T-cell (primary cell): ENCODE measurements at regions of chr11 and their contacts with region 1.

Region 1: DNA sequence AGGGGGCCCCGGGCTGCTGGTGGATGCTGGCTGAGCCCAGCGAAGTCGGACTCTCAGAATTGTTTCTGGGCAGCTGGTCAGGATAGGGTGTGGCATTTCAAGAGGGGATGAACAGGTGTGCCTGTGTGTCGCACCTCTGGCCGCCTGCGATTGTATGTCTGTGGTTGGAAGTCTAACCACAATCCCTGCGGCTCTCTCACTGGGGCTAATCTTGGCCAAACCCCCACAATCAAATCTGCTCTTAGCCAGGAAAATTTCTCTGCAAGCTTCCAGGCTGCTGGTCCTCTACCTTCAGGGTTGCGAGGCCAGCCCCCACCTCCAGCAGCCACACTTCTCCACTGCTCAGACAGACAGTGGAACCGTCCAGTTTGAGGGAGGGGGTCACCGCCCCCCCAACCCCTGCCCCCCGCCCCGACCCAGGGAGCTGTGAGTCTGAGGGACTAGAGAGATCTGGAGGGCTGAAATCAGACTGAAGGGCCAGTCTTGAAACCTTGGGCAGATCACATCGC is 953 bp downstream of the ATG16L2 start:
- DNase-seq: peak in 1 of 35 experiments; percentile 20
- ATAC-seq: no peak
- H3K4me3 ChIP-seq: peak overlapping the region; percentile 84 to 87
- H3K4me3 Mint-ChIP-seq: peak overlapping the region; percentile 95 to 99 (median 98)
- H3K27ac ChIP-seq: peak overlapping the region; percentile 100
- H3K27ac Mint-ChIP-seq: peak overlapping the region; percentile 94 to 97
- H3K4me1 ChIP-seq: peaks cover 7 to 50% of the 10 kb centered on the region in 2 experiments
- H3K4me1 Mint-ChIP-seq: peaks cover 49 to 73% (median 62%) of the 10 kb centered on the region in 3 donors
- H3K27me3 ChIP-seq: no peaks in the 10 kb centered on the region
- H3K27me3 Mint-ChIP-seq: no peaks in the 10 kb centered on the region

Region 2: DNA sequence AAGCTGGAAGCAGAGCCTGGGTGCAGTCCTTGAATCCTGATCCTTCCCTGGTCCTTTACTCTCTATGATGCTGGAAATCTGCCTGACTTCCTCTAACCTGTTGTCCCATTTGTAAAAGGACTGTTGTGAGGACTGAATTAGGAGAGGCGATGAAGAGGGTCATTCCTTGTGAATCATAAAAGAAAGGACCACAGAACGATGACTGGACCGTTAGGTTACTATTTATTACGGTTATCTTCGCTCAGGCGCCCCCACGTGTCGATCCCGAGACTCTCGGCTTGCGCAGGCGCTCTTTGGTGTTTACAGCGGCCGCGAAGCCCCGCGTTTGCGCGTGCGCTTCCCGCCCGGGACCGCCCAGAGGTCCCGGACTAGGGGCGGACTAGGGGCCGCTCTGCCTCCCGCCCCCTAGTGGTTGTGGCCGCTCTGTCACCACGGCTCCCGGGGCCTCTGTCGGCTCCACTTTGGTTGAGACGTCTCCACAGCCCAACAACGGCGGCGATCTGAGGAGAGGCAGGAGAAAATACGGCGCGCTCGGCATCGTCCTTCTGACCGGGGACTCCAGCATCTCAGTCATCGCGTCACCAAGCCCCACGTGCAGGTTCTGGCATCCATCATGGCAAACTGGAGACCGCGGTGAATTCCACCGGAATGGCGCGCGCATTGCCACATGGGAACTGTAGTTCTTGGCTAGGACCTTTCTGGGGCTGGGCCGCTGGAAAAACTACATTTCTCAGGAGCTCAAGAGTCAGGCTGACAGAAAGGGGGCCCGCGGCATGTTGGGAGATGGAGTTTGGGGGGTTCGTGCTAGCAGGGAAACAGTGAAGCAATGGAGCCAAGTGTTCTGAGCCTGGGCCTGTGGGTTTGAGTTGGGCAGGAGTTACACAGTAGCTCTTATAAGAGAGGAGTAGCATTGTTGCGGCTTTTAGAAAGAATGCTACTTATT is 21.5 kb before region 1 on chr11 and contains the start of gene STARD10:
- CTCF ChIA-PET with region 1: interaction called, 3 to 10 read pairs
- POLR2A ChIA-PET with region 1: no interaction called
- DNase-seq: peak; percentile 87 to 98 (median 93)
- ATAC-seq: peak; percentile 92 to 95 (median 94)
- H3K4me3 ChIP-seq: peak within 1 kb of the TSS; percentile 82 to 85
- H3K4me3 Mint-ChIP-seq: peak within 1 kb of the TSS; percentile 91 to 98 (median 97)
- H3K27ac ChIP-seq: peak within 1 kb of the TSS; percentile 99
- H3K27ac Mint-ChIP-seq: peak within 1 kb of the TSS; percentile 99 to 100
- H3K4me1 ChIP-seq: peaks cover 6 to 23% of the 10 kb centered on the region in 2 experiments
- H3K4me1 Mint-ChIP-seq: peaks cover 23 to 26% (median 26%) of the 10 kb centered on the region in 3 donors
- H3K27me3 ChIP-seq: no peaks in the 10 kb centered on the region
- H3K27me3 Mint-ChIP-seq: no peaks in the 10 kb centered on the region
- total RNA-seq, gene STARD10: 11.1 to 24.9 (median 19.1) TPM

Region 3: GRCh38 chr11:72831513-72832300 is 16.5 kb after region 1 on chr11:
- CTCF ChIA-PET with region 1: interaction called in 1 of 2 experiments, 10 read pairs
- POLR2A ChIA-PET with region 1: no interaction called
- DNase-seq: peak in 30 of 35 experiments; percentile 25 to 70 (median 48)
- ATAC-seq: peak; percentile 66 to 78 (median 68)
- H3K4me3 ChIP-seq: no peak overlapping the region
- H3K4me3 Mint-ChIP-seq: no peak overlapping the region
- H3K27ac ChIP-seq: no peak overlapping the region
- H3K27ac Mint-ChIP-seq: peak overlapping the region; percentile 55 to 73
- H3K4me1 ChIP-seq: peaks cover 0 to 15% of the 10 kb centered on the region in 2 experiments
- H3K4me1 Mint-ChIP-seq: peaks cover 0 to 21% (median 8%) of the 10 kb centered on the region in 3 donors
- H3K27me3 ChIP-seq: no peaks in the 10 kb centered on the region
- H3K27me3 Mint-ChIP-seq: no peaks in the 10 kb centered on the region